Endothelial cell of umbilical vein (primary cell): ENCODE measurements at regions of chr3 and their contacts with region 1.

Region 1: DNA sequence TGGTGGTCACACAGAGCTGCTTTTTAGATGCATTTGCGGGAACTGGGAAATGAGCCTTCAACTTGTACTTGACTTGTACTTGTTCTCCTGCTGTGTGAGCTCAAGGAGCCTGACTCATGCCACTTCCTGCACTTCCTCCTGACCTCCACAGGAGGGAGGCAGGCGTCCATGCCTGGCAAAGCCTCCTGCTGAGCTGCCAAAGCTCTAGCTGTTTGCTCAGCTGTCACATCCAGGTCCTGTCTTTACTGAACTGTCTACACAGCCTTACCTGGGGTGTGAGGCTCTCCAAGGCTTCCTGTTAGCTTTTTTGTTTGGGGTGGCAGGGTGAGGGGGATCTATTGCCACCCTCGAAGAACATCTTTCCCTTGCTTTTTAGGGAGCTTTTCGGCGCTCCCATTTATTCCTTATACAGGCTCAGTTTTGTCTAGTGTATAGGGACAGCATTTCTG is 6.4 kb downstream of the THPO start:
- DNase-seq: peak; percentile 92
- H3K4me3 ChIP-seq: no peak overlapping the region
- H3K27ac ChIP-seq: no peak overlapping the region
- H3K4me1 ChIP-seq: peaks cover 33% of the 10 kb centered on the region
- H3K27me3 ChIP-seq: peaks cover 7 to 10% of the 10 kb centered on the region in 2 experiments
- CTCF ChIP-seq: peak; percentile 97
- POLR2A ChIP-seq: no peak

Region 2: DNA sequence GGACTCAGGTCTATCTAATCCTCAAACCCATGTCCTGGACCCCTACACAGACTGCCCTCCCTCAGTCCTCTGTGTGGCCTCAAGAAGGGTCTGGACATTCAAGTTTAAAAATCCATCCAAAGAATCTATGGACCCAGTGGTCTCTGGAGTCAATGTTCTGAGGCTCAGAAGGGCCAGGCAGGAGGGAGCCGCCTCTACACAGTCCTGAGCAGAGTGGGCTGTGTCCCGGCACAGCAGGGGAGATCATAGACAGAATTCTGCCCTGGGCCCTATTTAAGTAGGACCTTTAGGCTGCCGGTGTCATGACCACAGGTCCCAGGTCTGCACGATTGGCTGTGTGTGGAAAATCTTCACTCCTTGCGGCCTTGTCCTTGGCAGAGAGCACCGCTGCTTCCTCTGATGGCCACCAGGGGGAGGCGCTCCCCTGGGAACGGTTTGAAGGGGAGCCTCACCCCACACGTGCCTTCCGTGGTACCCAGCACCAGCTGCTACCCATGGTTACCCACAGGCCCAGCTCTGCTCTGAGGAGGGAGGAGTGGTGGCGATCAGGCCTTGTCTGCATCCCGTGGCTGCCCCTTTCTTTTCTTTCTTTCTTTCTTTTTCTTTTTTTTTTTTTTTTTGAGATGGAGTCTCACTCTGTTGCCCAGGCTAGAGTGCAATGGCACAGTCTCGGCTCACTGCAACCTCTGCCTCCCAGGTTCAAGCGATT is 46.2 kb after region 1 on chr3:
- CTCF ChIA-PET with region 1: interaction called, 94 read pairs
- POLR2A ChIA-PET with region 1: interaction called, 3 read pairs
- dilution Hi-C with region 1: no loop called
- intact Hi-C with region 1: loop called (anchors 1 kb)
- DNase-seq: peak; percentile 62
- H3K4me3 ChIP-seq: no peak overlapping the region
- H3K27ac ChIP-seq: no peak overlapping the region
- H3K4me1 ChIP-seq: no peaks in the 10 kb centered on the region
- H3K27me3 ChIP-seq: no peaks in the 10 kb centered on the region
- CTCF ChIP-seq: peak; percentile 88 to 98
- POLR2A ChIP-seq: no peak

Region 3: DNA sequence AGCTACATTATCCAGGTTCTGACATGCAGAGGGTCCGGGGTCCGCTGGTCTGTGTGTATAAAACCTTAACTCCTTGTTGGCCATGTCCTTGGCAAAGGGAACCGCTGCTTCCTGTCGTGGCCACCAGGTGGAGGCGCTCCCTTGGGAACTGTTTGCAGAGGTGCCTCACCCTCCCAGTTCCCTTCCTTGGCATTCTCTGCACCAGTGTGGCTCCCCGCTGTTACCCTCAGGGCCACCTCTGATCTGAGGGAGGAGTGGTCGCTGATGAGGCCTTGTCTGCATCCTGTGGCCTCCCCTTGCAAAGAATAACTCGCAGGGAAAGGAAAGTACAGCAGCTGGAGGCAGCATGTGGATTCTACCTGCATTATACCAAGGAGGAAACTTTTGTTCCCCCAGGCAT is 97.8 kb after region 1 on chr3:
- CTCF ChIA-PET with region 1: interaction called, 181 read pairs
- POLR2A ChIA-PET with region 1: no interaction called
- dilution Hi-C with region 1: no loop called
- intact Hi-C with region 1: loop called (anchors 1 kb)
- DNase-seq: peak; percentile 42
- H3K4me3 ChIP-seq: no peak overlapping the region
- H3K27ac ChIP-seq: no peak overlapping the region
- H3K4me1 ChIP-seq: peaks cover 17% of the 10 kb centered on the region
- H3K27me3 ChIP-seq: peaks cover 2 to 16% of the 10 kb centered on the region in 2 experiments
- CTCF ChIP-seq: peak; percentile 75 to 76
- POLR2A ChIP-seq: no peak

Region 4: GRCh38 chr3:184513276-184514170 is 141.9 kb after region 1 on chr3:
- CTCF ChIA-PET with region 1: interaction called, 201 read pairs
- POLR2A ChIA-PET with region 1: interaction called, 4 read pairs
- dilution Hi-C with region 1: no loop called
- intact Hi-C with region 1: loop called (anchors 1 kb)
- DNase-seq: peak; percentile 79
- H3K4me3 ChIP-seq: peak overlapping the region in 1 of 3 experiments; percentile 11
- H3K27ac ChIP-seq: no peak overlapping the region
- H3K4me1 ChIP-seq: peaks cover 5% of the 10 kb centered on the region
- H3K27me3 ChIP-seq: peaks cover 28 to 32% of the 10 kb centered on the region in 2 experiments
- CTCF ChIP-seq: peak; percentile 82 to 89
- POLR2A ChIP-seq: no peak

Region 5: GRCh38 chr3:184531626-184532280 is 160.2 kb after region 1 on chr3:
- CTCF ChIA-PET with region 1: interaction called, 266 read pairs
- POLR2A ChIA-PET with region 1: no interaction called
- dilution Hi-C with region 1: no loop called
- intact Hi-C with region 1: no loop called
- DNase-seq: peak; percentile 41
- H3K4me3 ChIP-seq: peak overlapping the region in 1 of 3 experiments; percentile 19
- H3K27ac ChIP-seq: no peak overlapping the region
- H3K4me1 ChIP-seq: peaks cover 10% of the 10 kb centered on the region
- H3K27me3 ChIP-seq: peaks cover 5 to 11% of the 10 kb centered on the region in 2 experiments
- CTCF ChIP-seq: no peak
- POLR2A ChIP-seq: no peak

Region 6: DNA sequence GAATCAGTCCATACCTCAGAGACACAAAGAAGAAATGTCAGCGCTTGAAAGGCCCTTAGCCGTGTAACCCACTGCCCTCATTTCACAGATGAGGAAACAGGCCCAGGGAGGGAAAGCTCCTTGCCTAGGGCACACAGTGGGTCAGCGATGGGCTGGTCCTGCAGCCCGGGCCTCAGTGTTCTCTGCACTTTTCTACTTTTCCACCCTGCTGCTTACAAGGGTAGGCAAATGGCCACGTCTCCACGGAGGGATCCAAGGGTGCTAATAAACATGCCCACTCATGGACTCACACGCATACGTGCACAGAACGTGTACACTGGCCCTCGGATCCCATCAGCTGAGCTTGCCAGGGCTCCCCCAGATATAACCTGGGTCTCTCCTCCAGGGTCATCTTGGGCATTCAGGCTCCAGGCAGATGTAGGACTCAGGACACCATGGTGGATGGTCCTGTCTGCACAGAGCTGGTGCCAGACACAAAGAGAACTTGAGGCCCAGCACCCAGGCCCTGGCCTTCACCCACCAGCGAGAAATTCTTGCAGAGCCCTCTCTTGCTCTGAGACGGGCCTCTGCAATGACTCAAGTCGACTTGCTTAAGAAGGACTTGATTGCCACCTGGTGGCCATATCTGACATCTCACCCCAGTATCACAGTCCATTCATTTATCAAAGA is 405.9 kb after region 1 on chr3:
- CTCF ChIA-PET with region 1: interaction called, 3 read pairs
- POLR2A ChIA-PET with region 1: no interaction called
- dilution Hi-C with region 1: no loop called
- intact Hi-C with region 1: loop called (anchors 10 kb)
- DNase-seq: peak; percentile 85
- H3K4me3 ChIP-seq: no peak overlapping the region
- H3K27ac ChIP-seq: no peak overlapping the region
- H3K4me1 ChIP-seq: no peaks in the 10 kb centered on the region
- H3K27me3 ChIP-seq: peaks cover 0 to 12% of the 10 kb centered on the region in 2 experiments
- CTCF ChIP-seq: peak; percentile 67 to 75
- POLR2A ChIP-seq: no peak